ENCODE measurements at regions of chr12 and their contacts with region 1.

Region 1: DNA sequence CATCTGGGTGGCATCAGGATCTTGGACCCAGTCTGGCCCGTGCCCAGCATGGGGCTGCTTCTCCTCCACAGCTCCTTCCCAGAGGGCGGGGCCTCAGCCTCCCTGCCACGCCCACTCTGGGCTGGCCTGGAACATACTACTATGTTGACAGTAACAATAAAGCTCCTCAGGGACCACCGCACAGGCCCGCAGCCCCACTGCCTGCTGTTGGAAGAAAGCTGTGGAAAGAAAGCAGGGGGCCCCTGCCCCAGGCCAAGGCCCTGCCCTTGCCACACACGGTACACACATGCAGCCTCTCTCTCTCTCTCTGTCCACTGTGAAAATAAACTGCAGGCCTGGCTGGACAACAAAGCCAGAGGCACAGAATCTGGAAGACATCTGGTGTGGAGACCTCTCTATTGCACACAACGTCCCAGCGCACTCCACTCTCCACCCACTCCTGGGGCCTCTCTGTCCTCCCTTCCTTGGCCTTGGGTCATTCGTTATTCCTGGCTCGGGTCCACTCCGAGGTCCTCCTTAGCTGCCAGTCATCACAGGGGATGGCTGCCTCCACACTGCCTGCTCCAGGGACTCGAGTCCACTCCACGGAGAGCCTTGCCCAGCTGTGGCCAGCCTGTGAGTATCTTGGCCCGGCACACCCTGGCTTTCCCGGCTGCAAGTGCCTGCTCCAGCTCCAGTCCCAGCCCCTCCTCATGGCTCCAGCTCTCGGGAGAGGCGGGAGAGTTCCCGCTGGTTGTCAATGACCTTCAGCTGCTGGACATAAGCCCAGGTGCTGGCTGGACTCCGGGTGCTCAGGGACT is 11.8 kb upstream of the ENDOU start:
- DNase-seq: peak; percentile 73
- ATAC-seq: peak; percentile 85
- H3K4me3 ChIP-seq: no peak overlapping the region
- H3K27ac ChIP-seq: peak overlapping the region; percentile 43; the same call in 1 of the 2 replicates
- H3K4me1 ChIP-seq: peaks cover 18% of the 10 kb centered on the region
- H3K27me3 ChIP-seq: no peaks in the 10 kb centered on the region
- CTCF ChIP-seq: no peak
- POLR2A ChIP-seq: no peak
- RAD21 ChIP-seq: no peak

Region 2: GRCh38 chr12:47758834-47759690 is 22.0 kb after region 1 on chr12 and contains the start of gene RAPGEF3:
- CTCF ChIA-PET with region 1: interaction called, 6 read pairs
- POLR2A ChIA-PET with region 1: no interaction called
- dilution Hi-C with region 1: no loop called
- in situ Hi-C with region 1: no loop called
- intact Hi-C with region 1: loop called (anchors 2 kb)
- DNase-seq: peak; percentile 75
- ATAC-seq: peak; percentile 96
- H3K4me3 ChIP-seq: peak within 1 kb of the TSS; percentile 65
- H3K27ac ChIP-seq: peak within 1 kb of the TSS; percentile 43
- H3K4me1 ChIP-seq: peaks cover 12% of the 10 kb centered on the region
- H3K27me3 ChIP-seq: no peaks in the 10 kb centered on the region
- CTCF ChIP-seq: peak; percentile 50
- POLR2A ChIP-seq: peak; percentile 35; the same call in 1 of the 2 replicates
- RAD21 ChIP-seq: peak; percentile 39
- total RNA-seq, gene RAPGEF3: 0.83 and 1.3 TPM in 2 replicates

Measured in IMR-90 (cell line).